Activated CD8-positive, alpha-beta memory T cell treated with anti-CD3 and anti-CD28 coated beads, Interleukin-2, amount 10 ng/mL, durations not matched to agents 7 days and 5 days (primary cell): ENCODE measurements at regions of chr13 and their contacts with region 1.

Region 1: DNA sequence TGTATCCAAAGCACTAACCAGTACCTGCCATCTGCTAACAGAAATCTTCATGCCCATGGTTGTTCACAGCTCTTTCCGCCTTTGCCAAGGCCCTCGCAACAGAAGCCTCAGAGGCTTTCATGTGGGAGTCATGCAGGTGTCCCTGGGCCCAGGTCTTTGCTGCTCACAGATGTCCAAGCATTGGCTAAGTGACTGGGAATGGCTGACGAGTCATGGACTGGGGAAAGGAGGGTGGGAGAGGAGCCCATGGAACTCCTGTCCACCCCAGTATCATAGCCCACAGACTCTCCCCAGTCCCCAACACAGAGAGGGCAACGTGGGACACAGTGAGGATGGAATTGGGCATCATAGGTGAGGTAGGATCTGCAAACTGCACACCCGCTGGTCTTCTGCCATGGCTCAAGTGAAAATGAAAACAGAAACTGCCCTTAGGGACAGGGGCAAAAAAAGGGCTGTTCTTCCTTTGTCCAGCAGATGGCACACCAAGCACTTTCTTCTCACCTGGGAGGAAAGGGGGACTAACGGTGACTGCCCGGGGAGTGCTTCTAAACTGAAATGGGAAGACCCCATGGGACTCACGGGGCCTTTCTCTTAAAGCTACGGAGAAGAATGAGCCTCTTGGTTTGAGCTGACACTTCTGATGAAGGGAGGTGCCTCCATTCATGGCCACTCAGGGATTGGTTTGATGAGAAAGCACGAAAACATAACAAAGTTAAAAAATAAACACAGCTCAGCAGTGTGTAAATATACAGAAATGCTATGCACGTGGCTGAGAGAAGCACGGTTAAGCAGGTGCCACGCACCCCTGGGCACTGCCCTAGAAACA is 11.1 kb upstream of the DHRS12 start:
- DNase-seq: peak; percentile 87
- ATAC-seq: peak; percentile 95
- H3K4me3 Mint-ChIP-seq: peak overlapping the region; percentile 53
- H3K27ac Mint-ChIP-seq: peak overlapping the region; percentile 77
- H3K4me1 Mint-ChIP-seq: peaks cover 30% of the 10 kb centered on the region
- H3K27me3 Mint-ChIP-seq: no peaks in the 10 kb centered on the region

Region 2: GRCh38 chr13:51804295-51805172 is 10.5 kb before region 1 on chr13:
- CTCF ChIA-PET with region 1: interaction called, 58 read pairs
- DNase-seq: peak; percentile 56
- ATAC-seq: no peak
- H3K4me3 Mint-ChIP-seq: peak overlapping the region; percentile 87
- H3K27ac Mint-ChIP-seq: peak overlapping the region; percentile 80
- H3K4me1 Mint-ChIP-seq: peaks cover 36% of the 10 kb centered on the region
- H3K27me3 Mint-ChIP-seq: no peaks in the 10 kb centered on the region

Region 3: DNA sequence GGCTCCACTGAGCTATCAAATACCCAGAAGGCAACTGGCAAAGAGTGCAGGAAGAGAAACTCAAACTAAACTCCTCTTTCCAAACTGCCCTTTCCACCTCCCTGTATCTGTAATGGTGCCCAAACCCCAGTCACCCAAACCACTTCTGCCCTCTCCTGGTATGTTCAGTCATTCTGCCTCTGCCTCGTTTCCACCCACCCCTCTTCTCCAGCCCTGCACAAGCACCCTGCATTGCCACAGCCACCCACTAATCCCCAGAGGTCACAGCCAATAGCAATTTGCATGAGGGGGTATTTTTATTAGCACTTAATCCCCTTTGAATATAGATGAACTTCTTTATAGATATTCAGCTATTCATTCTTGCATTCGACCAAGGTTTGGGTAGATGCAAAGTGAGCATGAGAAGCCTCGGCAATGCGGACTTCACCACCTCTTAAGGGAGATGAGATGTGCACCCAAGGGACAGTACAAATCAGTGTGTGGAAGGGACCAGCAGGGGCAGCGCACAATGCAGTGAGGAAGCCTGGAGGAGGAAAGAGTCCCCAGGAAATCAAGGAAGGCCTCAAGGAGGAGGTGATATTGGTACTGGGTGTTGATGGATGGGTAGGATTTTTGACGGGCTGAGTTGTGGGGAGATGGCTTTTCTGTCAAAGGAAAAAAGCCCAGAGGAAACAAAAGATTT is 17.6 kb after region 1 on chr13:
- CTCF ChIA-PET with region 1: interaction called, 43 read pairs
- DNase-seq: peak; percentile 62
- ATAC-seq: peak; percentile 87
- H3K4me3 Mint-ChIP-seq: no peak overlapping the region
- H3K27ac Mint-ChIP-seq: no peak overlapping the region
- H3K4me1 Mint-ChIP-seq: peaks cover 20% of the 10 kb centered on the region
- H3K27me3 Mint-ChIP-seq: peaks cover 4% of the 10 kb centered on the region

Region 4: GRCh38 chr13:51844862-51845573 is 30.0 kb after region 1 on chr13 and contains the start of gene TMEM272:
- CTCF ChIA-PET with region 1: interaction called, 24 read pairs
- DNase-seq: no peak
- ATAC-seq: peak; percentile 67
- H3K4me3 Mint-ChIP-seq: peak within 1 kb of the TSS; percentile 12
- H3K27ac Mint-ChIP-seq: no peak within 1 kb of the TSS
- H3K4me1 Mint-ChIP-seq: peaks cover 10% of the 10 kb centered on the region
- H3K27me3 Mint-ChIP-seq: peaks cover 22% of the 10 kb centered on the region
- total RNA-seq, gene TMEM272: 0.09 TPM

Region 5: GRCh38 chr13:52450012-52450792 is 635.2 kb after region 1 on chr13 and contains the start of gene VPS36:
- CTCF ChIA-PET with region 1: interaction called, 12 read pairs
- DNase-seq: peak; percentile 95
- ATAC-seq: peak; percentile 83
- H3K4me3 Mint-ChIP-seq: peak within 1 kb of the TSS; percentile 87
- H3K27ac Mint-ChIP-seq: peak within 1 kb of the TSS; percentile 93
- H3K4me1 Mint-ChIP-seq: peaks cover 41% of the 10 kb centered on the region
- H3K27me3 Mint-ChIP-seq: peaks cover under 1% of the 10 kb centered on the region
- total RNA-seq, gene VPS36: 42.5 to 46.7 TPM